ENCODE measurements at regions of chr2 and their contacts with region 1.

Region 1: GRCh38 chr2:240149943-240150784 is 9.7 kb upstream of the OTOS start:
- DNase-seq: no peak
- H3K4me3 ChIP-seq: no peak overlapping the region
- H3K27ac ChIP-seq: no peak overlapping the region
- H3K4me1 ChIP-seq: no peaks in the 10 kb centered on the region
- H3K27me3 ChIP-seq: no peaks in the 10 kb centered on the region
- CTCF ChIP-seq: peak; percentile 42 to 61 (median 59)
- EP300 ChIP-seq: no peak
- POLR2A ChIP-seq: no peak

Region 2: GRCh38 chr2:240013343-240013742 is 136.8 kb before region 1 on chr2:
- in situ Hi-C with region 1: no loop called
- intact Hi-C with region 1: no loop called
- DNase-seq: no peak
- H3K4me3 ChIP-seq: no peak overlapping the region
- H3K27ac ChIP-seq: no peak overlapping the region
- H3K4me1 ChIP-seq: no peaks in the 10 kb centered on the region
- H3K27me3 ChIP-seq: no peaks in the 10 kb centered on the region
- CTCF ChIP-seq: peak in 3 of 5 experiments; percentile 12 to 20 (median 15)
- EP300 ChIP-seq: no peak
- POLR2A ChIP-seq: no peak

Region 3: DNA sequence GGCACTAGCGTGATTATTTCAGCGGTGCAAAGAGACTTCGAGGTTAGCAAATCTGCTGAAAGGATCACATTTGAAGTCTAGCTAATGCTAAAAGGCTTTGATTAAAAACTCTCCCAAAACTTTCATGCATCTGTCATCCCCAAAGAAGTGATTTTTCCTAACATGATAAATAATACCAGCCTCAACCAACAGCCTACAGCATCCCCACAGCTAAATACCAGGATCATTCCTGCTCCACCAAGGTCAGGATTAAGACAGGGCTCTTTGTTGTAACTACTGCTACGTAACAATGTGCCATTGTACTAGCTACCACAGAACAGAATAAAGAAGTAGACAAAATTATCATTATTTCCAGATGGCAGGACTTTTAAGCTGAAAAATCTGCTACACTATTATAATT is 98.5 kb before region 1 on chr2:
- in situ Hi-C with region 1: loop called in 1 of 4 experiments (anchors 10 kb)
- intact Hi-C with region 1: no loop called
- DNase-seq: no peak
- H3K4me3 ChIP-seq: no peak overlapping the region
- H3K27ac ChIP-seq: no peak overlapping the region
- H3K4me1 ChIP-seq: no peaks in the 10 kb centered on the region
- H3K27me3 ChIP-seq: peaks cover 86% of the 10 kb centered on the region
- CTCF ChIP-seq: no peak
- EP300 ChIP-seq: no peak
- POLR2A ChIP-seq: no peak

Region 4: GRCh38 chr2:240064898-240065297 is 85.3 kb before region 1 on chr2:
- in situ Hi-C with region 1: no loop called
- intact Hi-C with region 1: no loop called
- DNase-seq: no peak
- H3K4me3 ChIP-seq: no peak overlapping the region
- H3K27ac ChIP-seq: no peak overlapping the region
- H3K4me1 ChIP-seq: no peaks in the 10 kb centered on the region
- H3K27me3 ChIP-seq: peaks cover 18% of the 10 kb centered on the region
- CTCF ChIP-seq: no peak
- EP300 ChIP-seq: no peak
- POLR2A ChIP-seq: no peak

Region 5: DNA sequence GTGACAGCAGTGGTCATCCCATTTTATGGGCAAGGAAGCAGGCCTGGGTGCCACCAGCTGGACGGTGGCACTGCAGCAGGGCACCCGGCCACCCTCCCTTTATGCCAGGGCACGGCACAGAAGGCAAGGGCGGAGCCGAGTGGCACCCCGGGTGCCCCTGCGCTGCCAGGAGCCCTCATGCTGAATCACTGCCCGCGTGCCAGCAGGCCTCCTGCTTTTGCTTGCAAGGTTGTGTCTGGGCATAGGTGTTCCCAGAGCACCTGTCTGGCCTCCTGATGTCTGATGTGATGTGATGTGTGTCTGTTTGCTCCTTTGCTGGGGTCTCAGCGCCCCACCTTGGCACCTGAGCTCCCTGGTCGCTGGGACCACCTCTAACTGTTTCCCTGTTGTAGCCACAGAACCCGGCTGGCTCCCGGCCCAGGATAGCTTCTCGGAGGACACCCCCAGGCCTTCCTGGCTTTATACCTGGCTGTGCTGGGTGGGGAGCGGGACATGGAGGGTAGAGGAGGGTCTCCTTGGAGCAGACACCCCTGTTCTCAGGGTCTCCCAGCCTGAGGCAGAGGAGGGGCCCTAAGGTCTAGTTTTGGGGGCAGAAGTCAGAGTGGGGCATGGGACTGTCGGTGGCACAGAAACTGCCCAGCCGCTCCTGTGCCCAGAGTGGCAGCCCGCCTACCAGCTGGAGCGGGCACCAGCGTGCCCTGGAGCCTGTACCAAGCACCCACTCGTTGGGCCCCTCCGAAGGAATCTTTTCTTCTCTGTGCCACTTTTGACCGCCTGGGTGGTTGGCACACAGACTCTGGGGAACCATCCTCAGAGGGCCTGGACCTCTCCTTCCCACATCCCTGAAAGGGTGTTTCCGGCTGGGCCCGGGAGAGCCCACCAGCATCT is 288.9 kb after region 1 on chr2:
- in situ Hi-C with region 1: no loop called
- intact Hi-C with region 1: no loop called
- DNase-seq: no peak
- H3K4me3 ChIP-seq: no peak overlapping the region
- H3K27ac ChIP-seq: no peak overlapping the region
- H3K4me1 ChIP-seq: peaks cover 14 to 32% (median 22%) of the 10 kb centered on the region in 4 donors
- H3K27me3 ChIP-seq: peaks cover 22% of the 10 kb centered on the region
- CTCF ChIP-seq: no peak
- EP300 ChIP-seq: no peak
- POLR2A ChIP-seq: no peak

Region 6: DNA sequence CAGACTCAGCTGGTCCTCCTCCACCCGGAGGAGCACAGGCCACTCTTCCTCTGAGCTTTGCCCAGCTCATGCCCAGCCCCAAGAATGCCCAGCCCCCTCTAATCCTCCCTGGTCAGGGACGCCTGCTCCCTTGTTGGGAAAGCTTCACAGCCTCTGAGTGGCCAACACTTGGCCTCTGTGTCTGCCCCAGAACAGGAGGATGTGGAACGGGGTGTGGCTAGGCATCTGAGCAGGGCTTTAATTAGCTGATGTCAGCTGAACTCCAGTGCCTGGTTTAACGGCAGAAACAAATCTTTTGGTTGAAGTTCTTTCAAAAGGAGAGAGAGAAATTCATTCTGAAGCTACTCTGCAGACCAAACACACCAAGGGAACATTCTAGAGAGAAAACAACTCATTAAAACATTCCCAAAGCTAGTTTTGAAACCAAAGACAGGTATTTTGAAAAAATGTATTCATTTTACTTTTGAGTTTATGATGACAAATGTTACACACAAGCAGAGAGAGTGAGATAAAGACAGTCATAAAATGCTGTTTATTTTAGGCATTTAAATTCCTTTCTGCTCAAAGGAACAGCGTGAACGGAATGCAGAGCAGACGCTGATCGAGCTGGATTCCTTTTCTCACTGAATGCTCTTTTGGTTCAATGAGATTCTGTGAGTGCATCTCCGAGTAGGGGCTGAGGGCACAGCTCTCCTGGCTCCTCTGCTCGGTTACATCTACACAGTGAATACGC is 1783.2 kb after region 1 on chr2:
- in situ Hi-C with region 1: no loop called
- intact Hi-C with region 1: no loop called
- DNase-seq: peak; percentile 42
- H3K4me3 ChIP-seq: no peak overlapping the region
- H3K27ac ChIP-seq: peak overlapping the region; percentile 45 to 71 (median 52)
- H3K4me1 ChIP-seq: peaks cover 12 to 17% (median 14%) of the 10 kb centered on the region in 4 donors
- H3K27me3 ChIP-seq: no peaks in the 10 kb centered on the region
- CTCF ChIP-seq: no peak
- EP300 ChIP-seq: peak; percentile 49
- POLR2A ChIP-seq: no peak

Measured in transverse colon (tissue), 4 donors.